ENCODE measurements at regions of chrX and their contacts with region 1.

Region 1: GRCh38 chrX:49287665-49288064 is 15.8 kb upstream of the GAGE10 start:
- DNase-seq: peak; percentile 47
- ATAC-seq: peak; percentile 65
- H3K4me3 Mint-ChIP-seq: peak overlapping the region; percentile 30
- H3K27ac Mint-ChIP-seq: peak overlapping the region; percentile 70
- H3K4me1 Mint-ChIP-seq: peaks cover 29% of the 10 kb centered on the region
- H3K27me3 Mint-ChIP-seq: no peaks in the 10 kb centered on the region

Region 2: DNA sequence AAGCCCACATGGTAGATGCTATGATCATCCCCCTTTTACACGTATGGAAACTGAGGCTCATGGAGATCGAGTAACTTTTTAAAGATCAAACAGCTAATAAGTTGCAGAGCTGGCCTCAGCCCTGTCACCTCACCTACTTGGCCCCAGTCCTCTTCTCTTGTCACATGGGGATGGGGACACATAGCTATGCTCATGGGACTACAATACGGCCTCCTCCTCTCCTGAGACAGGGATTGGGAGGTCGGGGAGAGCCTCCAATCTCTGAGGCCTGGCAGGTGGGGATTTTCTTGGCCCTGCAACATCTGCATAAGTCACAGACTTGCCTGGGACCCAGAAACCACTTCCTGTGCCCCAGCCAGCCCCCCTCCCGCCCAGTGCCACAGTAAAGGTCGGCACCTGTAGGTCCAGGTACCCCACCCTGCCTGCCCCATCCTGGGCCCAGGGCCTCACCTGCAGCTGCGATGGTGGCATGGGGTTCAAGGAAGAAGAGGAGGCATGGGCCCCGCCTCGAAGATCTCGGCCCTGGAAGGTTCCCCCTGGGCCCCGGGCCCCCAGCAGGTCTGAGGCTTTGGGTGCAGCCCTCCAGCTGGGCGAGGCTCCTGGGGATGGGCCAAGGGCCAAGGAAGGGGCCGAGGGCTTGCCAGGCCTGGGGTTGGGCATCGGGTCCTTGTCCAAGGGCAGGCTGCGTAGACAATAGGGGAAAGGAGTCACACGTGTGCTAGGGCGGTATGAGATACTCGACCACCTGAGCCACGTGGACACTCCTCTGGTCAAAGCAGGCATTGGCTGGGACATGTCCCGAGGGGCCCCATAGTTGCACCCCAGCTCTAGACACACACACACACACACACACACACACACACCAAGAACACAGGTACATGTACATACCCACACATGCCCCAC is 29.6 kb before region 1 on chrX:
- POLR2A ChIA-PET with region 1: no interaction called
- DNase-seq: no peak
- ATAC-seq: peak; percentile 51
- H3K4me3 Mint-ChIP-seq: peak overlapping the region; percentile 42
- H3K27ac Mint-ChIP-seq: peak overlapping the region; percentile 60
- H3K4me1 Mint-ChIP-seq: peaks cover 19% of the 10 kb centered on the region
- H3K27me3 Mint-ChIP-seq: no peaks in the 10 kb centered on the region

Region 3: GRCh38 chrX:49276671-49277534 is 10.8 kb before region 1 on chrX:
- POLR2A ChIA-PET with region 1: interaction called, 19 read pairs
- DNase-seq: peak; percentile 31
- ATAC-seq: no peak
- H3K4me3 Mint-ChIP-seq: peak overlapping the region; percentile 71
- H3K27ac Mint-ChIP-seq: peak overlapping the region; percentile 96
- H3K4me1 Mint-ChIP-seq: peaks cover 56% of the 10 kb centered on the region
- H3K27me3 Mint-ChIP-seq: no peaks in the 10 kb centered on the region

Region 4: GRCh38 chrX:49316085-49316484 is 28.4 kb after region 1 on chrX:
- POLR2A ChIA-PET with region 1: no interaction called
- DNase-seq: no peak
- ATAC-seq: no peak
- H3K4me3 Mint-ChIP-seq: no peak overlapping the region
- H3K27ac Mint-ChIP-seq: no peak overlapping the region
- H3K4me1 Mint-ChIP-seq: no peaks in the 10 kb centered on the region
- H3K27me3 Mint-ChIP-seq: no peaks in the 10 kb centered on the region